ENCODE measurements at regions of chr9 and their contacts with region 1.

Region 1: DNA sequence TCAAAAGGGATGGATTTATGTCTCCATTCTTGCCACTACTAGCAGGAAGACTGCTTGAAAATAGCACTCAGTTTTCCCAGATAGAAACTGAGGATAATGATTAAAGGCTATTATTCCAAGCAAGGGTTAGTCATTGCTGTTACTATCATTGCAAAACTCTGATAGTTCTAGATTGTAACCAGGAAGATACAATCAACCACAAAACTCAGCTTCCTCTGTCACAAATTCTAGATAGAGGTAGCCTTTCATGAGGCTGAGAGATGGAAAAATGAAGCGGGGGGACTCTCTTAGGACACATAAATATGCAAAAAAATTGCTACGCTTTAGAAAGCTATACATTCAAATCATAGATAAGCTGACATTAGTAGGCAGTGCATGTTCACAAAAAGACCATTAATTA is 3.1 kb downstream of the ANXA1 start:
- DNase-seq: peak; percentile 66 to 77 (median 68)
- H3K4me3 ChIP-seq: peak overlapping the region; percentile 3 to 78
- H3K4me3 Mint-ChIP-seq: peak overlapping the region; percentile 92 to 99 (median 94)
- H3K27ac ChIP-seq: peak overlapping the region; percentile 75
- H3K27ac Mint-ChIP-seq: peak overlapping the region; percentile 95 to 99 (median 97)
- H3K4me1 ChIP-seq: peaks cover 65% of the 10 kb centered on the region
- H3K4me1 Mint-ChIP-seq: peaks cover 37 to 68% (median 52%) of the 10 kb centered on the region in 4 donors
- H3K27me3 ChIP-seq: no peaks in the 10 kb centered on the region
- H3K27me3 Mint-ChIP-seq: no peaks in the 10 kb centered on the region

Region 2: DNA sequence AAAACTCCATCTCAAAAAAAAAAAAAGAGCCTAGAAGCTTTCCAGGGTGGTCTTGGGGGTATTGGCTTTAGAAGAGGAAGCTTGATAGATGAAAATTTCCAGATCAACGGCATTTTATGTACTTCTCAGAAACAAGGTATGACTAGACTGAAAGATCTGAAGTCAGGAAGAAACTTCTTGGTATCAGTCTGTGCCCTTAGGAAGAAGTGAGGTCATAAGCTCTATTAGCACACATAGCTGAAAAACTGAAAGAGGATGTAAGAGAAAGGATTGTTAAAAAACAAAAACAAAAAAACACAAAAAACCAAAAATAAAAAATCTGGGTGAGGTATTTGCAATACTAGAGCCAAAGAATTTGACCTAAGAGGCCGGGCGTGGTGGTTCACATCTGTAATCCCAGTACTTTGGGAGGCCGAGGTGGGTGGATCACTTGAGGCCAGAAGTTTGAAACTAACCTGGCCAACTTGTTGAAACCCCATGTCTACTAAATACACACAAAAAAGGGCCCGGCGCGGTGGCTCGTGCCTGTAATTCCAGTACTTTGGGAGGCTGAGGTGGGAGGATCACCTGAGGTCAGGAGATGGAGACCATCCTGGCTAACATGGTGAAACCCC is 613.0 kb before region 1 on chr9:
- CTCF ChIA-PET with region 1: no interaction called
- POLR2A ChIA-PET with region 1: no interaction called
- intact Hi-C with region 1: no loop called
- DNase-seq: no peak
- H3K4me3 ChIP-seq: no peak overlapping the region
- H3K4me3 Mint-ChIP-seq: no peak overlapping the region
- H3K27ac ChIP-seq: no peak overlapping the region
- H3K27ac Mint-ChIP-seq: no peak overlapping the region
- H3K4me1 ChIP-seq: no peaks in the 10 kb centered on the region
- H3K4me1 Mint-ChIP-seq: no peaks in the 10 kb centered on the region
- H3K27me3 ChIP-seq: no peaks in the 10 kb centered on the region
- H3K27me3 Mint-ChIP-seq: no peaks in the 10 kb centered on the region

Region 3: DNA sequence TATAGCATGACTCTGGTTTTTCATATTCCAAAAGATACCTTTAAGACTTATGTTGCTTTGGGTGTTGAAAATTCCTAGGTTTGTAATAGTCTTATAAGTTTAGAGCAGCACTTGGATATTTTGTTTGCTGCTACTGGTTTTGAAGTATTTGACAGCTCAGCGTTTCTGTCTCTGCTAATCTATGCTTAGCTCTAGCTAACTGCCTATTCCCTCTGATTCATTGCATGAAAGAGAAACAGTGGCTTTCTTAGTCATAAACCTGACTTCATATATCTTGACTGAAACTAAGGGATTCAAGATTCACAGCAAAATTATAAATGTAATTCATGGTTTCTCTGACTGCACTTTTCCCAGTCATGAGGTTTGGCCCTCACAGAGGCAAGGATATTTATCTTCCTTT is 38.7 kb before region 1 on chr9:
- CTCF ChIA-PET with region 1: interaction called, 10 read pairs
- POLR2A ChIA-PET with region 1: interaction called, 13 read pairs
- intact Hi-C with region 1: no loop called
- DNase-seq: no peak
- H3K4me3 ChIP-seq: no peak overlapping the region
- H3K4me3 Mint-ChIP-seq: peak overlapping the region in 1 of 8 donors; percentile 18
- H3K27ac ChIP-seq: no peak overlapping the region
- H3K27ac Mint-ChIP-seq: peak overlapping the region in 4 of 7 donors; percentile 55 to 72 (median 63)
- H3K4me1 ChIP-seq: peaks cover 35% of the 10 kb centered on the region
- H3K4me1 Mint-ChIP-seq: peaks cover 23 to 45% (median 33%) of the 10 kb centered on the region in 4 donors
- H3K27me3 ChIP-seq: no peaks in the 10 kb centered on the region
- H3K27me3 Mint-ChIP-seq: no peaks in the 10 kb centered on the region

Region 4: GRCh38 chr9:73173557-73174329 is 19.0 kb after region 1 on chr9:
- CTCF ChIA-PET with region 1: interaction called, 4 read pairs
- POLR2A ChIA-PET with region 1: interaction called, 20 read pairs
- intact Hi-C with region 1: no loop called
- DNase-seq: no peak
- H3K4me3 ChIP-seq: no peak overlapping the region
- H3K4me3 Mint-ChIP-seq: no peak overlapping the region
- H3K27ac ChIP-seq: no peak overlapping the region
- H3K27ac Mint-ChIP-seq: peak overlapping the region in 1 of 7 donors; percentile 14
- H3K4me1 ChIP-seq: no peaks in the 10 kb centered on the region
- H3K4me1 Mint-ChIP-seq: peaks cover 0 to 11% (median 2%) of the 10 kb centered on the region in 4 donors
- H3K27me3 ChIP-seq: no peaks in the 10 kb centered on the region
- H3K27me3 Mint-ChIP-seq: no peaks in the 10 kb centered on the region